ENCODE measurements at regions of chr15 and their contacts with region 1.

Region 1: DNA sequence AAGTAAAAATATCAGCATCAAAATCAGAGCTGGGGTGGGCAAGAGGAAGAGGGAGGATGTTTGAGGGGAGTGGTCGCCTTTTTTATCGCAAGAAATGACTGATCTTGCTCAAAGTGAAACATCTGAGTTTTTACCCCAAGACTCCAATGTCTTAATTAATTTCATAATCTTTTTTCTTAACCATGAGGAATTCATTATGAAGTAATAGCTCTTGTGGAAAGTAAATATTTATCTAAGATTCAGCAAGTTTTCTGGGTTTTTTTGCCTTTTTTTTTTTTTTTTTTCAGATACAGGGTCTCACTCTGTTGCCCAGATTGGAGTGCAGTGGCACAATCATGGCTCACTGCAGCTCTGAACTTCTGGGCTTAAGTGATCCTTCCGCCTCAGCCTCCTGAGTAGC is 35.4 kb upstream of the FURIN start:
- DNase-seq: no peak
- H3K4me3 Mint-ChIP-seq: no peak overlapping the region
- H3K27ac Mint-ChIP-seq: no peak overlapping the region
- H3K4me1 Mint-ChIP-seq: no peaks in the 10 kb centered on the region
- H3K27me3 Mint-ChIP-seq: peaks cover 35% of the 10 kb centered on the region
- CTCF ChIP-seq: no peak

Region 2: GRCh38 chr15:90620379-90621067 is 212.5 kb before region 1 on chr15:
- CTCF ChIA-PET with region 1: no interaction called
- intact Hi-C with region 1: no loop called
- DNase-seq: no peak
- H3K4me3 Mint-ChIP-seq: no peak overlapping the region
- H3K27ac Mint-ChIP-seq: no peak overlapping the region
- H3K4me1 Mint-ChIP-seq: no peaks in the 10 kb centered on the region
- H3K27me3 Mint-ChIP-seq: no peaks in the 10 kb centered on the region
- CTCF ChIP-seq: no peak

Region 3: DNA sequence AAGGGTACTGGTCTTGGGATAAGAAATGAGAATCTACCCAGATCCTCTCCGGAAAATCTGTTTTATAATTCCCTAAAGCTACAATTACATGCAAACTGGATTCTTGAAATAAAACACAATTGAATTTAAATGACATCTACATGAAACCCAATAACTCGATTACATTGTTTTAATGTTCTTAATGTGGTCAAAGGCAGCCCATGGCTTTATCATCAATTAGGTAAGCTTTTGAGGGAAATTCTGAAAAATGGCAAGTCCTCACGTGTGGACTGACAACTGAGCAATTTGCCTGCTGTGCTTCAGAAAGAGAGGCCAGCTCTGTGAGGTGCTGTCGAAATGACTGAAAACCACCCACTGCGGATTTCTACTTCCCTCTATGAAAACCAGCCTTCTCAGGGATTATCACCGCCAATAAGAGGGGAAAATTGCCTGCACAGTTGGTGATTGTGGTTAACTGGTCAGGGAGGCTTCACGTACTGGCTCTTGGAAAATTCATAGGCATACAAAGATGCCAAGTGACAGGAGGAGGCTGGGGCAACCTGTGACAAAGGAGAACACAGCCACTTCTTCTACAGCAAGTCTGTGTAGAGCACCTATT is 819.7 kb after region 1 on chr15:
- CTCF ChIA-PET with region 1: interaction called, 12 read pairs
- intact Hi-C with region 1: no loop called
- DNase-seq: no peak
- H3K4me3 Mint-ChIP-seq: no peak overlapping the region
- H3K27ac Mint-ChIP-seq: no peak overlapping the region
- H3K4me1 Mint-ChIP-seq: no peaks in the 10 kb centered on the region
- H3K27me3 Mint-ChIP-seq: no peaks in the 10 kb centered on the region
- CTCF ChIP-seq: no peak

Measured in Calu3 (cell line).